ENCODE measurements at regions of chr13 and their contacts with region 1.

Region 1: DNA sequence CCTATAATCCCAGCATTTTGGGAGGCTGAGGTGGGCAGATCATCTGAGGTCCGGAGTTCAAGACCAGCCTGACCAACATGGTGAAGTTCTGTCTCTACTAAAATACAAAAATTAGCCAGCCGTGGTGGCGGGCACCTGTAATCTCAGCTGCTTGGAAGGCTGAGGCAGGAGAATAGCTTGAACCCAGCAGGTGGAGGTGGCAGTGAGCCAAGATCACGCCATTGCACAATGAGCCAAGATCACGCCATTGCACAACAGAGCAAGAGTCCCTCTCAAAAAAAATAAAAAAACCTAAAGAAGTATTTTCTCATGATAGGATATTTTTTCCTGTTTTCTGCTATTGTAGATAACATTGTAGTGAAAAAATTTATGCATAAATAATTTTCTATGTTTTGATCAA is 13.3 kb downstream of the IFT88 start:
- DNase-seq: no peak
- ATAC-seq: no peak
- H3K4me3 Mint-ChIP-seq: no peak overlapping the region
- H3K27ac Mint-ChIP-seq: no peak overlapping the region
- H3K4me1 Mint-ChIP-seq: no peaks in the 10 kb centered on the region
- H3K27me3 Mint-ChIP-seq: no peaks in the 10 kb centered on the region
- CTCF ChIP-seq: no peak

Region 2: GRCh38 chr13:20301403-20302071 is 278.7 kb before region 1 on chr13:
- CTCF ChIA-PET with region 1: no interaction called
- POLR2A ChIA-PET with region 1: no interaction called
- intact Hi-C with region 1: no loop called
- DNase-seq: no peak
- ATAC-seq: no peak
- H3K4me3 Mint-ChIP-seq: no peak overlapping the region
- H3K27ac Mint-ChIP-seq: no peak overlapping the region
- H3K4me1 Mint-ChIP-seq: no peaks in the 10 kb centered on the region
- H3K27me3 Mint-ChIP-seq: peaks cover 37% of the 10 kb centered on the region
- CTCF ChIP-seq: no peak

Region 3: GRCh38 chr13:20594280-20594679 is 14.0 kb after region 1 on chr13:
- CTCF ChIA-PET with region 1: no interaction called
- POLR2A ChIA-PET with region 1: no interaction called
- intact Hi-C with region 1: loop called (anchors 2 kb)
- DNase-seq: no peak
- ATAC-seq: no peak
- H3K4me3 Mint-ChIP-seq: no peak overlapping the region
- H3K27ac Mint-ChIP-seq: no peak overlapping the region
- H3K4me1 Mint-ChIP-seq: no peaks in the 10 kb centered on the region
- H3K27me3 Mint-ChIP-seq: no peaks in the 10 kb centered on the region
- CTCF ChIP-seq: no peak

Region 4: GRCh38 chr13:20616059-20616797 is 36.0 kb after region 1 on chr13:
- CTCF ChIA-PET with region 1: no interaction called
- POLR2A ChIA-PET with region 1: no interaction called
- intact Hi-C with region 1: no loop called
- DNase-seq: no peak
- ATAC-seq: no peak
- H3K4me3 Mint-ChIP-seq: no peak overlapping the region
- H3K27ac Mint-ChIP-seq: no peak overlapping the region
- H3K4me1 Mint-ChIP-seq: no peaks in the 10 kb centered on the region
- H3K27me3 Mint-ChIP-seq: no peaks in the 10 kb centered on the region
- CTCF ChIP-seq: no peak

Measured in activated B cell treated with CpG ODN at 0.5 μM for 24 hours (primary cell).